HepG2 (cell line): ENCODE measurements at regions of chr7 and their contacts with region 1.

Region 1: GRCh38 chr7:47266131-47266706 is 315.7 kb downstream of the TNS3 start:
- DNase-seq: peak; percentile 82
- ATAC-seq: peak; percentile 93
- H3K4me3 ChIP-seq: peak overlapping the region in 1 of 3 experiments; percentile 15; a peak in 1 of 6 replicates
- H3K27ac ChIP-seq: peak overlapping the region; percentile 50
- H3K4me1 ChIP-seq: peaks cover 14% of the 10 kb centered on the region
- H3K27me3 ChIP-seq: no peaks in the 10 kb centered on the region
- CTCF ChIP-seq: peak; percentile 93
- EP300 ChIP-seq: no peak
- POLR2A ChIP-seq: no peak
- RAD21 ChIP-seq: peak; percentile 91

Region 2: GRCh38 chr7:47254081-47255006 is 11.9 kb before region 1 on chr7:
- CTCF ChIA-PET with region 1: no interaction called
- POLR2A ChIA-PET with region 1: no interaction called
- in situ Hi-C with region 1: no loop called
- intact Hi-C with region 1: no loop called
- DNase-seq: peak; percentile 20
- ATAC-seq: peak; percentile 95
- H3K4me3 ChIP-seq: peak overlapping the region; percentile 51 to 73 (median 58)
- H3K27ac ChIP-seq: no peak overlapping the region
- H3K4me1 ChIP-seq: peaks cover 15% of the 10 kb centered on the region; the same call in 1 of the 2 replicates
- H3K27me3 ChIP-seq: peaks cover 0 to 30% of the 10 kb centered on the region in 2 experiments
- CTCF ChIP-seq: peak; percentile 74
- EP300 ChIP-seq: no peak
- POLR2A ChIP-seq: no peak
- RAD21 ChIP-seq: peak; percentile 77

Region 3: GRCh38 chr7:47337531-47337930 is 71.3 kb after region 1 on chr7:
- CTCF ChIA-PET with region 1: no interaction called
- POLR2A ChIA-PET with region 1: no interaction called
- in situ Hi-C with region 1: no loop called
- intact Hi-C with region 1: loop called (anchors 5 kb)
- DNase-seq: no peak
- ATAC-seq: 0 out of 3 replicates have a peak, but pooled peaks have one; percentile 31
- H3K4me3 ChIP-seq: no peak overlapping the region
- H3K27ac ChIP-seq: no peak overlapping the region
- H3K4me1 ChIP-seq: no peaks in the 10 kb centered on the region
- H3K27me3 ChIP-seq: no peaks in the 10 kb centered on the region
- CTCF ChIP-seq: no peak
- EP300 ChIP-seq: no peak
- POLR2A ChIP-seq: no peak
- RAD21 ChIP-seq: no peak

Region 4: DNA sequence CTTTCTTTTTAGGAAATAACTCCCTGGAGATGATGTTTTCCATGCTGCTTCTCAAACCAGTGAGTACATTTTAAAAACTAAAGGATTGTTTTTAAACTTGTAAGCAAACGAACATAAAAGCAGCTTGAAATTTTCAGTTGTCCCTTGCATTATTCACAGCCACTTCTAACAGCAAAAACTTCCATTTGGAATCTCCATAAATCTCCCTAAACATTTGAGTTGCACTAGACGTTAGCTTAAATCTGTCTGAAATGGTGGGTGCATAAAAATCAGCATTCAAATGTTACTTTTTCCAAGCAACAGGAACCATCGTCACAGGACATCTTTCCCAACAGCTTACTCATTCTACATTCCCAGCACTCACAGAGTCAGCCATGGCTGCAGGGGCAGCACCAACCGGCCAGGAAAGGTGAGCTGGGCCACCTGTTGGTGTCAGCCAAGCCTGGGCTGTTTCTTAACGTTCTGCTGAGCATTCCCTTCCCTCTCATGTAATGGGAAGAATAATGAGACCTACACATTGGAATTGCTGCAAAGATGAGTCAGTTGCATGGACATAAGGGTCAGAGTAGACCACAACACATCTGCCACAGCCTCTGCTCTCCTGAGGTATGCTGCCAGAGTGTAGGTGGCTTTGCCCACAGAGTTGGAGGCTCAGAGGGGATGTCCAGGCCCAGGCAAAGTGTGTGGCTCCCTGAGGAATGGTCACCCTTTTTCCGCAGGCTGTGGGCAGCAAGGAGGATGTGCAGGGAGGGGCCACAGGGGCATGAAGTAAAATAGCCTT is 152.6 kb after region 1 on chr7:
- CTCF ChIA-PET with region 1: no interaction called
- POLR2A ChIA-PET with region 1: no interaction called
- in situ Hi-C with region 1: no loop called
- intact Hi-C with region 1: loop called (anchors 10 kb)
- DNase-seq: no peak
- ATAC-seq: no peak; the same call in 2 of the 3 replicates
- H3K4me3 ChIP-seq: no peak overlapping the region
- H3K27ac ChIP-seq: no peak overlapping the region
- H3K4me1 ChIP-seq: peaks cover 24% of the 10 kb centered on the region
- H3K27me3 ChIP-seq: no peaks in the 10 kb centered on the region
- CTCF ChIP-seq: no peak
- EP300 ChIP-seq: no peak
- POLR2A ChIP-seq: no peak
- RAD21 ChIP-seq: no peak

Region 5: GRCh38 chr7:47945261-47946001 is 679.2 kb after region 1 on chr7:
- CTCF ChIA-PET with region 1: interaction called, 3 read pairs
- POLR2A ChIA-PET with region 1: no interaction called
- in situ Hi-C with region 1: no loop called
- intact Hi-C with region 1: loop called (anchors 10 kb)
- DNase-seq: peak; percentile 57
- ATAC-seq: peak; percentile 61; the same call in 2 of the 3 replicates
- H3K4me3 ChIP-seq: no peak overlapping the region
- H3K27ac ChIP-seq: no peak overlapping the region
- H3K4me1 ChIP-seq: peaks cover 29% of the 10 kb centered on the region
- H3K27me3 ChIP-seq: peaks cover 2 to 7% of the 10 kb centered on the region in 2 experiments; a peak in 2 of 5 replicates
- CTCF ChIP-seq: peak; percentile 79
- EP300 ChIP-seq: no peak
- POLR2A ChIP-seq: no peak
- RAD21 ChIP-seq: peak; percentile 60; the same call in 1 of the 2 replicates